ENCODE measurements at regions of chr20 and their contacts with region 1.

Region 1: GRCh38 chr20:57089691-57090150 is 176.7 kb downstream of the BMP7 start:
- DNase-seq: peak; percentile 38 to 92 (median 80)

Region 2: DNA sequence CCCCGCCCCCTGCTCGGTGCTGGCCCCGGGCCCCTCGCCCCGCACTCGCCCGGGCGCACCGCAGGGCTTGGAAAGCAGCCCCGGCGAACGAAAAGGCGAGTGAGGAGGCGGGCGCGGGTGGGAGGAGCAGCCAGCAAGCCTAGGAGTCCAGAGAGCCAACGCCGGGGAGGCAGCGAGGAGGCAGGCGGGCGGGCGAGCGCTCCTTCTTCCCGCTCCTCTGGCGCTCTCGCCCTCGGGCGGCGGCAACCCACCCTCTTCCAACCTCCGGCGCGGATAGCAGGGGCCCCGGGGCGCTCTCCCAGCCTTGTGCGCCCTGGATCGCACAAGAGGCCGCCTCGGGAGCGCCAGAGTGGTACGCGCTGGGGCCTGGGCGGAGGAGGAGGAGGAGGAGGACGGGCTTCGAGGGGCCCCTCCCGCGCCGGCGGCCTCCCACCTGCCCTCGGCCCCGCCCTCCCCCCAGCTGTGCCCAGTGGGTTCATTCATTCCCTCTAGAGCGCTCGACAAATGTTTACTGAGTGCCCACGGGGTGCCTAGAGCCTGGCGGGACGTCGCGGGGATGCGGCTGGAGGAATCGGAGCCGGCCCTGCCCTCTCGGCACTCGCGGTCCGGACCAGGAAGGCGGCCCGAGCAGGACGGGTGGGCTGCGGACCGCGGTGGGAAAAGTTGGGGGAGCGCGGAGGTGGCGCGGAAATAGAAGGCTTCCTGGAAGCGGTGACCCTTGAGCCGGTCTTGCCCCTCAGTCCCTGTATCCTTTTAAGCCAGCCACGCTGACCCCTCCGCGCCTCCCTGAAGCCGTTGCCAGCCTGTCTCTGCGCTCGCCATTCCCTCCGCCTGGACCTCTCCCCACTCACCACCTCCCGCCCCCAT is 176.8 kb after region 1 on chr20 and contains the start of gene BMP7:
- intact Hi-C with region 1: loop called (anchors 10 kb)
- DNase-seq: peak in 31 of 42 donors; percentile 27 to 76 (median 57)

Region 3: DNA sequence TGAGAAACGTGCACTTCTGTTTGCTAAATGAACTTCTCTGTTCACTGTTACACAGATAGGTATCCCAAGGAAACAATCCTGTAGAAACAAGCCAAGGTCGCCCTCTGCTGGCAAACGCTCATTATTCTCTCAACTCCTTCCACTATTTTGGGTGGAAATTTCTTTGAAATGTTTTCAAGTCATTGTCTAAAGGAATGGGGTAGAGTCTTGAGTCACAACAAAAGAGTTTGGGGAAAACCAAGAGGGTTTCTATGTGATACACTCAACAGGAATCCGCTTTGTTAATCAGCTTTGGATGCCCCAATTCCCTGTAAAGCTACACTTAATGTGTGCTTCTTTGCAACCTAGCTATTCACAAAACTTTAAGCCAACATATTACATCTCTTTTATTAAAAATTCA is 256.8 kb after region 1 on chr20:
- intact Hi-C with region 1: loop called (anchors 2 kb)
- DNase-seq: peak; percentile 51 to 96 (median 89)

Measured in head of caudate nucleus (tissue), 42 donors.